Left lung (tissue), 14 donors: ENCODE measurements at regions of chr6 and their contacts with region 1.

Region 1: DNA sequence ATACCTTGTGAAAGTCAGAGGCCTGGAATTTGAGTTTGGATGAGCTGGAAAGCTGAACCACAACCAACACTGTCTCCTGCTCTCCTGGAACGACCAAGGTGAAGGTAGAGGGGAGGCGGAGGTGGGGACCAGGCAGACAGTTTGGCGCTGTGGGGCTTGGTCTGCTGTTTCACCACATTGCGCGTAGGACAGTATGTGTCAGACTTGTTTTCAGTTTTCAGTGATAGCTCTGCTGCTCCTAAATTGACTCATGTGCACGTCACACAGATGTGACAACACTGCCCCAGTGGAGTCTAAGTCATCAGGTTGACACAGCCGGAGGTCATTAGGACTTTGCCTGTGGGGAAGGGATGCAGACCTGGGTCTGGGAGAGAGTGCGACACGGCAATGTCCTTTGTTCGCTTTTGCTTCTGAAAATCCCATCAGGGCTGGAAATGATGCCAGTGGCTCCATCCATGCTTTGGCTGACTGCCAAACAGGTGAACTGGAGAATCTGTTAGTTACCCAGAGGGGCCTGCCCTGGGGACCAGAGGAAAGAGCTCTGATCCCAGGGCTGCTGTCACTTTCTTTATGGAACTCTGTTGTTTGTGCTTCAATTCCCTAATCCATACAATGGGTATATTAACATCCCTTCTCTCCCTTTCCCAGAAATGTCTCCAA is 255.5 kb downstream of the CDC5L start:
- DNase-seq: no peak
- ATAC-seq: no peak
- H3K4me3 ChIP-seq: no peak overlapping the region
- H3K27ac ChIP-seq: no peak overlapping the region
- H3K4me1 ChIP-seq: no peaks in the 10 kb centered on the region
- H3K27me3 ChIP-seq: no peaks in the 10 kb centered on the region
- CTCF ChIP-seq: no peak

Region 2: DNA sequence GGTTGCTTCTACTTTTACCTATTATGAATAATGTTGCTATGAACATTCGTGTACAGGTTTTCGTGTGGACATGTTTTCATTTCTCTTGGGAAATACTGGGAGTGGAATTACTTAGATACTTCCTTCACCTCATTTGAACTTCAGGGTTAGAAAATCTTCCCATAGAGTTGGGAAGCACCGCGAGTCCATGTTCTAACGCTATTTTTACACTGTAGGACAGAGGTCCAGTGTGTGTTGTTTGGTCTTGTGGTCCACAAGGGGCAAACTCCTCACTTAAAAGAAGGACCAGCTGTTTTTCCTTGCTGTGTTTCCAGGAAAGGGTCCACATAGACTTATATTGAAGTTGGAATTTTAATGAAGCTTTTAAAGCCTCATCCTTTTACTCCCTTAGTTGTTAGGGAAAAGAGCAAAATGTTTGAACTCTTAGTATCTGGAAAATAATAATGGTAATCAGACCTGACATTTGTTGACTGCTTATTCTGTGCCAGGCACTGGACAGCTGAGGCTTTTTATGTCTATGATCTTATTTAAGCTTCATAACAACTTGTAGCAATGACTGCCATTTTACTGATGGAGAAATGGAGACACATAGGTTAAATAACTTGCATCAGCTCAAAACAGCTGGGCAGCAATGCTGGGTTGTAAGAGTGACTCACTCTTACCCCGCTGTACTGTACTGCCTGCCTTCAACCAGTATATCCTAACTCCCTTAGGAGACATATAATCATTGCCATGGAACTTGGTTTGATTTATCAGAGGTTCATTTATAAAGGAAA is 203.5 kb before region 1 on chr6:
- intact Hi-C with region 1: no loop called
- DNase-seq: no peak
- ATAC-seq: peak; percentile 36
- H3K4me3 ChIP-seq: no peak overlapping the region
- H3K27ac ChIP-seq: no peak overlapping the region
- H3K4me1 ChIP-seq: no peaks in the 10 kb centered on the region
- H3K27me3 ChIP-seq: no peaks in the 10 kb centered on the region
- CTCF ChIP-seq: no peak

Region 3: GRCh38 chr6:44475779-44476434 is 167.1 kb before region 1 on chr6:
- intact Hi-C with region 1: loop called in 1 of 2 experiments (anchors 10 kb)
- DNase-seq: peak; percentile 77 to 94 (median 84)
- ATAC-seq: peak; percentile 99
- H3K4me3 ChIP-seq: no peak overlapping the region
- H3K27ac ChIP-seq: no peak overlapping the region
- H3K4me1 ChIP-seq: peaks cover 0 to 8% of the 10 kb centered on the region in 2 donors
- H3K27me3 ChIP-seq: peaks cover 0 to 21% of the 10 kb centered on the region in 2 donors
- CTCF ChIP-seq: peak; percentile 88 to 92

Region 4: GRCh38 chr6:44989391-44989790 is 346.4 kb after region 1 on chr6:
- intact Hi-C with region 1: no loop called
- DNase-seq: no peak
- ATAC-seq: no peak
- H3K4me3 ChIP-seq: no peak overlapping the region
- H3K27ac ChIP-seq: no peak overlapping the region
- H3K4me1 ChIP-seq: no peaks in the 10 kb centered on the region
- H3K27me3 ChIP-seq: no peaks in the 10 kb centered on the region
- CTCF ChIP-seq: no peak